Mammary epithelial cell (primary cell): ENCODE measurements at regions of chr18 and their contacts with region 1.

Region 1: GRCh38 chr18:9894454-9895068 is 8.8 kb downstream of the TXNDC2 start:
- DNase-seq: no peak
- H3K4me3 ChIP-seq: no peak overlapping the region
- H3K27ac ChIP-seq: no peak overlapping the region
- H3K4me1 ChIP-seq: peaks cover 19% of the 10 kb centered on the region
- H3K27me3 ChIP-seq: no peaks in the 10 kb centered on the region
- CTCF ChIP-seq: no peak

Region 2: DNA sequence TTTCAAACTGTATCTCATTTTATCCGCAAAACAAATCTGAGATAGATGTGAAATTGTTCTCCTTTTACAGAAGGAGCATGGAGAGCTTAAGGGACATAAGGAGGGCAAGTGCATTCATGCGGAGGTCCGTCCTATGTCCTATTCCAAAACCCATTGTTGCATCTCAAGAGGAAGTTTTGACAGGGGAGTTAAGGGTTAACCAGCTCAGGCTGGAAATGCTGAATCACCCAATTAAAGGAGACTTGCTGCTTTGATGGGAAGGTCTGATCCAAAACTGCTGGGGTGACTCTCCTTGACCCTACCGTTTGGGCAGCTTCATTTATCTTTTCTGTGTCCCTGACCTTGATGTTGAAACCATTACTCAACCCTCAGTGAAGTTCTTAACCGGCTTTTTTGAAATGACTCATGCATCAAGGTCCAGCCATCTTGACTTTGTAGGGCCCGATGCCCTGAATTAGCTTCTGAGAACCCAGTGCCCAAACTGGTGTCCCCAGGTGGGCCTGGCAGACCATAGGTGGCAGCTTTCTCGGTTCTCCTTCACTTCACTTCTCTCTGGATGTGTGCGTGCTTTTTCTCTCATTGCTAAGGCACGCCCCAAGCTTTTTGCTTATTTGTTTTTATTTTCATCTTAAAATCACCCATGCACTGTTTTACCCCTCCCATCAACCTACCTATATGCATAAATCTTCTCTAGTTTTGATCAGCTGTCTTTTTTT is 24.7 kb before region 1 on chr18:
- CTCF ChIA-PET with region 1: no interaction called
- dilution Hi-C with region 1: no loop called
- in situ Hi-C with region 1: no loop called
- intact Hi-C with region 1: loop called (anchors 2 kb)
- DNase-seq: peak; percentile 63
- H3K4me3 ChIP-seq: no peak overlapping the region
- H3K27ac ChIP-seq: no peak overlapping the region
- H3K4me1 ChIP-seq: peaks cover 26% of the 10 kb centered on the region
- H3K27me3 ChIP-seq: no peaks in the 10 kb centered on the region
- CTCF ChIP-seq: no peak

Region 3: GRCh38 chr18:9943311-9943710 is 48.8 kb after region 1 on chr18:
- CTCF ChIA-PET with region 1: no interaction called
- dilution Hi-C with region 1: no loop called
- in situ Hi-C with region 1: no loop called
- intact Hi-C with region 1: no loop called
- DNase-seq: no peak
- H3K4me3 ChIP-seq: no peak overlapping the region
- H3K27ac ChIP-seq: no peak overlapping the region
- H3K4me1 ChIP-seq: peaks cover 8% of the 10 kb centered on the region
- H3K27me3 ChIP-seq: no peaks in the 10 kb centered on the region
- CTCF ChIP-seq: no peak